ENCODE measurements at regions of chr5 and their contacts with region 1.

Region 1: GRCh38 chr5:141878711-141879425 is 658 bp upstream of the PCDH1 start:
- DNase-seq: peak; percentile 77
- H3K4me3 Mint-ChIP-seq: peak overlapping the region; percentile 78
- H3K27ac Mint-ChIP-seq: peak overlapping the region; percentile 1
- H3K4me1 Mint-ChIP-seq: peaks cover 14% of the 10 kb centered on the region
- H3K27me3 Mint-ChIP-seq: peaks cover 76% of the 10 kb centered on the region

Region 2: GRCh38 chr5:141664732-141665461 is 214.0 kb before region 1 on chr5:
- intact Hi-C with region 1: loop called (anchors 1 kb)
- DNase-seq: peak; percentile 61
- H3K4me3 Mint-ChIP-seq: no peak overlapping the region
- H3K27ac Mint-ChIP-seq: no peak overlapping the region
- H3K4me1 Mint-ChIP-seq: peaks cover 5% of the 10 kb centered on the region
- H3K27me3 Mint-ChIP-seq: no peaks in the 10 kb centered on the region

Region 3: GRCh38 chr5:141701360-141702119 is 177.3 kb before region 1 on chr5:
- intact Hi-C with region 1: loop called (anchors 1 kb)
- DNase-seq: no peak
- H3K4me3 Mint-ChIP-seq: peak overlapping the region; percentile 67
- H3K27ac Mint-ChIP-seq: no peak overlapping the region
- H3K4me1 Mint-ChIP-seq: peaks cover 10% of the 10 kb centered on the region
- H3K27me3 Mint-ChIP-seq: peaks cover 36% of the 10 kb centered on the region

Region 4: DNA sequence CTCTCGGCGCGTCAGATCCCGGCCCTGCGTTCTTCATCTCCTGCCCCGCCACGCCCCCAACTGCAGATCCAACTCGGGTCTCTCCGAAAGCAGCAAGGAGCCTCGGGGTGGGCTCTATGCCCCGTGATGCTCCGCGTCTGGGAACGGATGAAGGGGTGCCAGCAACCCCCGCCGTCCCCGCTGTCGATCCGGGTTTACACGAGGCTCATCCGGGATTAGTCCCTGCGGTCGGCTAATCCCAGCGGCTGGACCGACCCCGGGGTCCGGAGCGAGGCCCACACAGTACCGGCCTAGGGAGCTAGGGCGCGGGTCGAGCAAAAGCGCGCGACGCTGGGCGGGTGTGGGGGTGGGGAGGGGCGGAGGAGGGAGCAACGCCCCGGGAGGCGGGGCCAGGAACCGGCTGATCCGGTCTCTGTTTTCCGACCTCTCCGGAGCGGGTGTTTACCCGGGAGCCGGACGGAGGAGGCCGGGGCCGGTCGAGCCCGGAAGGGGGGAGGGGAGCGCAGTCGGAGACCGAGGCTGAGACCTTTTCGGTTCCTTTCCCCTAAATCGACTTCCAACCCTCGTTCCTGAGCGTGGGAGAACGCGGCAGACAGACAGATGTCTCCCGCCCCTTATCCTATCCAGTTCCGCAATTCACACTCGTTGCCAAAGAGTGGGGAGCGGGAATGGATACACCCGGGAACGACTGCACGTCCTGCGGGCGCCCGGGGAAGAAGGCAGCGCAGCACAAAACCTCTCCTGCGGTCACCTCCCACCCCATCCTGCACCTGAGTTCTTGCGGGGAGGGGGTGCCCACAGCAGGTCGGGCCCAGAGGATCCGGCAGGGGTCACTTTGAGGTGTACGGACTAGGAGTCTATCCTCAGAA is 29.3 kb before region 1 on chr5:
- intact Hi-C with region 1: loop called (anchors 2 kb)
- DNase-seq: peak; percentile 66
- H3K4me3 Mint-ChIP-seq: peak overlapping the region; percentile 85
- H3K27ac Mint-ChIP-seq: peak overlapping the region; percentile 84
- H3K4me1 Mint-ChIP-seq: peaks cover 14% of the 10 kb centered on the region
- H3K27me3 Mint-ChIP-seq: no peaks in the 10 kb centered on the region